ENCODE measurements at regions of chr9 and their contacts with region 1.

Region 1: GRCh38 chr9:27573634-27574590 is 631 bp upstream of the C9orf72 start:
- DNase-seq: peak; percentile 100
- ATAC-seq: peak; percentile 84
- H3K4me3 ChIP-seq: peak overlapping the region; percentile 81 to 94 (median 92)
- H3K4me3 Mint-ChIP-seq: peak overlapping the region; percentile 98
- H3K27ac ChIP-seq: peak overlapping the region; percentile 97 to 99
- H3K27ac Mint-ChIP-seq: peak overlapping the region; percentile 100
- H3K4me1 ChIP-seq: peaks cover 16 to 19% of the 10 kb centered on the region in 2 donors
- H3K4me1 Mint-ChIP-seq: peaks cover 27% of the 10 kb centered on the region
- H3K27me3 ChIP-seq: no peaks in the 10 kb centered on the region
- H3K27me3 Mint-ChIP-seq: no peaks in the 10 kb centered on the region
- CTCF ChIP-seq: no peak

Region 2: GRCh38 chr9:26946753-26947727 is 626.9 kb before region 1 on chr9 and contains the start of gene PLAA:
- CTCF ChIA-PET with region 1: no interaction called
- POLR2A ChIA-PET with region 1: no interaction called
- intact Hi-C with region 1: loop called (anchors 1 kb)
- DNase-seq: peak; percentile 93
- ATAC-seq: peak; percentile 96
- H3K4me3 ChIP-seq: peak within 1 kb of the TSS; percentile 80 to 98 (median 89)
- H3K4me3 Mint-ChIP-seq: peak within 1 kb of the TSS; percentile 94
- H3K27ac ChIP-seq: peak within 1 kb of the TSS; percentile 95 to 96
- H3K27ac Mint-ChIP-seq: peak within 1 kb of the TSS; percentile 96
- H3K4me1 ChIP-seq: peaks cover 20% of the 10 kb centered on the region in 2 donors
- H3K4me1 Mint-ChIP-seq: peaks cover 46% of the 10 kb centered on the region
- H3K27me3 ChIP-seq: no peaks in the 10 kb centered on the region
- H3K27me3 Mint-ChIP-seq: peaks cover 7% of the 10 kb centered on the region
- CTCF ChIP-seq: no peak
- total RNA-seq, gene PLAA: 22.5 and 24.0 TPM in 2 replicates

Region 3: GRCh38 chr9:27586304-27586703 is 12.4 kb after region 1 on chr9:
- CTCF ChIA-PET with region 1: interaction called, 3 read pairs
- POLR2A ChIA-PET with region 1: no interaction called
- intact Hi-C with region 1: loop called (anchors 1 kb)
- DNase-seq: peak; percentile 40
- ATAC-seq: no peak
- H3K4me3 ChIP-seq: peak overlapping the region in 1 of 5 experiments; percentile 17
- H3K4me3 Mint-ChIP-seq: no peak overlapping the region
- H3K27ac ChIP-seq: peak overlapping the region in 1 of 2 donors; percentile 6
- H3K27ac Mint-ChIP-seq: no peak overlapping the region
- H3K4me1 ChIP-seq: peaks cover 9 to 18% of the 10 kb centered on the region in 2 donors
- H3K4me1 Mint-ChIP-seq: peaks cover 19% of the 10 kb centered on the region
- H3K27me3 ChIP-seq: peaks cover 0 to 4% (median 0%) of the 10 kb centered on the region in 4 experiments
- H3K27me3 Mint-ChIP-seq: peaks cover 10% of the 10 kb centered on the region
- CTCF ChIP-seq: no peak

Measured in B cell (primary cell).